Cardiac septum (tissue), 1 donor: ENCODE measurements at regions of chr19 and their contacts with region 1.

Region 1: GRCh38 chr19:13588957-13589833 is 82.9 kb upstream of the CACNA1A start:
- DNase-seq: peak; percentile 86

Region 2: DNA sequence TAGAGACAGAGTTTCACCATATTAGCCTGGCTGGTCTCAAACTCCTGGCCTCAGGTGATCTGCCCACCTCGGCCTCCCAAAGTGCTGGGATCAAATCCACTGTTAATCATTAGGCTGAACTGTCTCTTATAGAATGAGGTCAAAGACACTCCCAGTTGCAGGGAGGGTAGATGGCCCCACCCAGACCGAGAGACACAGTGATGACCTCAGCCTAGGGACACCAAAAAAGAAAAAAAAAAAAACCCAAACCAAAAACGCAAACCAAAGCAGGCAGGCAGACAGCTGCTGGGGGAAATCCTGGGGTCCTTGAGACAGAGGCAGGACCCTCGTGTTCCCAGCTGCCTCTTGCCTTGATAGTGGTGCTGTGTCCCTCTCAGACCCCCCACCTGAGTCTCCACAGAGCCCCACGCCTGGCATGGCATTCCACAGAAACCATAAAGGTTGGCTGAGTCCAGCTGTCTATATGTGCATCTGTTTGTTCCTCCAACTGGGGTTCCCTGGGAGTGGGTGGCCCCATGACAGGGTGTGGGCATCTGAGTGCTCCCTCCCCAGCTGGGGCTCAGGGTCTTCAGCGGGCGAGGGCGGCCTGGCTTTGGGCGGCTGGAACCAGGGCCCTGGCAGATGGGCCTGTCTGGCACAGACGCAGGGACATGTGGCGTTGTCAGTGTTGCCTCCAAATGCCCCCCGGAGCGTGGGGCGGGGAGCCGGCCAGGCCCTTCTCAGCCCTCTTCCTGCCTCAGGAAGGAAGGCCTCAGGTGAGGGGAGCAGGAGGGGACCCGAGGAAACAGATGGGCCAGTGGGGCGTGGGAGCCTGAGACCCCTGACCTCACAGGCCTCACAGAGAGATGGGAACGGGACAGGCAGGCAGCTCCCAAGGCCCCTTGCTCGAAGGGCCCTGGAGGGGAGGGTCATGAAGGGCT is 614.6 kb before region 1 on chr19:
- intact Hi-C with region 1: loop called (anchors 10 kb)
- DNase-seq: no peak

Region 3: DNA sequence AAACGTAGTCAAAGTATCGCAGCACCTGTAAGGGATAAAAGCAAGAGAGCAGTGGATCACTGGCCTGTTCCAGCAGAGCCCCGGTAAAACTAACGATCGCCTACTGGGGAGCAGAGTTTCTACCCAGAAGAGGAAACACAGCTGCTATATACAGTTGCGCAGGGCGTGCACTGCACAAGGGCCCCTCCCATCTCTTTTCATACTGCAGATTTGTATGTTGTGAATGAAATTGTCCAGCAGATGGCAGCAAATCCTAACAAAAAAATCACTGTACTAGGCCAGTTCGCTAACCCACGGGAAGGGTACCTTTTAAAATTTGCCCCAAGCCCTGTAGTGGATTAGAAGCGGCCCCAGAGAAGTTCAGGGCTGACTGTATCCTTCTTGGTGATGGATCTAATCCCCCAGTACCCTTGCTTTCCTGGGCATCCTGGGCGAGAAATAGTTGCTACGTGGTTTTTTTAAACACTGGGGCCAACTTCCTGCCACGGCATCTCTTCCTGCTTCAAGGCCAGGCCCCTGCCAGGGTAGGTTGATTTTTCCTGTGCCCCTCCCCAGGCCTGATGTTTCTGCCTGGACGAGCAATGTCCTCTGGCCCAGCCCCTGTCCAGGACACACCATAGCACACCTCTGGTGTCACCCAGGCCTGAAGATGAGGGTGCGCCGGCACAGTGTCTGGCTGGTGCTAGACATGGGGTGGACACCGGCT is 311.9 kb before region 1 on chr19:
- intact Hi-C with region 1: loop called (anchors 1 kb)
- DNase-seq: no peak